A673 (cell line): ENCODE measurements at regions of chr16 and their contacts with region 1.

Region 1: DNA sequence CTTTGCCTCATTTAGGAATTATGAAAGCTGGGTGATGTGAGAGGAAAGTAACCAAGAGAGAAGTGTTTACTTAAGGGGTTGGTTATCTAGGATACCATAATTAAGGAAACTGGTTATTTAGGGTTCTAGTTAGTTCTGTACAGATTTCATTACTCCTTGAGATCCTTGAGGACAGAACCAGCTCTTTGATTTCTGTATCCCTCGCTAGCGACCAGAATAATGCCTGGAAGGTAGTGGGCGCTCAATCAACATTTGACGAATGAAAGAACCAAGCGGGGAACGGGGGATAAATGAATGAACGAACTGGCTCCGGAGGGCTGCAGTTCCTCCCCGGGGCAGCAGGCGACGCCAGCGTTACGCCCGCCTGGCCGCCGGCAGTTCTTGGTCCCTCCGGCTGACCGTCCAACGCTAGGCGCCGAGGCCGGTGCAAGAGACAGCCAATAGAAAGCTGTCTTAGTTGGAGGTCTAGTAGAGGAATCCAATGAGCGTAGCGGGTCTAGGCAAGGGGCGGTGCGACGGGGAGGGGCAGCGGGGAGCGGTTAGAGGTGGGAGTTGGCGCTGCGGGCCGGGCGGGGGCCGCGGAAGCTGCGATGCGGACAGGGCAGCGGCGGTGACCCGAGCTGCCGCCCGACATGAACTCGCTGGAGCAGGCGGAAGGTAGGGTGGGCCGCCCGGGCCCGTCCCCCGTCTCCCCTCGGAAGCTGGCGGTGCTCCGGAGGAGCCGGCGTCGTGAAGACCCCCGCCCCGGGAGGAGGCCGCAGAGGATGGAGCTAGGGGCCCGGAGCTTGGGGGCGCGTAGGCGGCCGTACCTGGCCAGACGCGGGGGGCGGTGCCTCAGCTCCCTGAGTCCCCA is at the start of gene CNEP1R1:
- DNase-seq: peak; percentile 97
- H3K4me3 ChIP-seq: peak within 1 kb of the TSS; percentile 91
- H3K27ac ChIP-seq: peak within 1 kb of the TSS; percentile 68
- H3K4me1 ChIP-seq: peaks cover 16% of the 10 kb centered on the region
- H3K27me3 ChIP-seq: no peaks in the 10 kb centered on the region
- CTCF ChIP-seq: peak; percentile 100
- total RNA-seq, gene CNEP1R1: 23.5 and 24.2 TPM in 2 replicates

Region 2: GRCh38 chr16:49407873-49408550 is 616.9 kb before region 1 on chr16:
- CTCF ChIA-PET with region 1: no interaction called
- POLR2A ChIA-PET with region 1: no interaction called
- intact Hi-C with region 1: loop called (anchors 1 kb)
- DNase-seq: peak; percentile 87
- H3K4me3 ChIP-seq: no peak overlapping the region
- H3K27ac ChIP-seq: no peak overlapping the region
- H3K4me1 ChIP-seq: no peaks in the 10 kb centered on the region
- H3K27me3 ChIP-seq: no peaks in the 10 kb centered on the region
- CTCF ChIP-seq: peak; percentile 89

Region 3: GRCh38 chr16:49958448-49958847 is 66.5 kb before region 1 on chr16:
- CTCF ChIA-PET with region 1: interaction called, 11 read pairs
- POLR2A ChIA-PET with region 1: no interaction called
- intact Hi-C with region 1: no loop called
- DNase-seq: no peak
- H3K4me3 ChIP-seq: no peak overlapping the region
- H3K27ac ChIP-seq: no peak overlapping the region
- H3K4me1 ChIP-seq: no peaks in the 10 kb centered on the region
- H3K27me3 ChIP-seq: no peaks in the 10 kb centered on the region
- CTCF ChIP-seq: no peak

Region 4: GRCh38 chr16:50065624-50066481 is 40.9 kb after region 1 on chr16 and contains the start of gene HEATR3:
- CTCF ChIA-PET with region 1: interaction called, 6 read pairs
- POLR2A ChIA-PET with region 1: no interaction called
- intact Hi-C with region 1: loop called (anchors 5 kb)
- DNase-seq: peak; percentile 94
- H3K4me3 ChIP-seq: peak within 1 kb of the TSS; percentile 78
- H3K27ac ChIP-seq: peak within 1 kb of the TSS; percentile 94
- H3K4me1 ChIP-seq: no peaks in the 10 kb centered on the region
- H3K27me3 ChIP-seq: no peaks in the 10 kb centered on the region
- CTCF ChIP-seq: no peak
- total RNA-seq, gene HEATR3: 29.4 and 41.8 TPM in 2 replicates

Region 5: GRCh38 chr16:50354629-50355456 is 329.9 kb after region 1 on chr16:
- CTCF ChIA-PET with region 1: interaction called, 10 read pairs
- POLR2A ChIA-PET with region 1: no interaction called
- intact Hi-C with region 1: loop called (anchors 10 kb)
- DNase-seq: peak; percentile 42
- H3K4me3 ChIP-seq: no peak overlapping the region
- H3K27ac ChIP-seq: no peak overlapping the region
- H3K4me1 ChIP-seq: no peaks in the 10 kb centered on the region
- H3K27me3 ChIP-seq: no peaks in the 10 kb centered on the region
- CTCF ChIP-seq: peak; percentile 77